ENCODE measurements at regions of chr3 and their contacts with region 1.

Region 1: GRCh38 chr3:169041677-169042171 is 621.8 kb downstream of the MECOM start:
- DNase-seq: peak; percentile 87
- H3K4me3 ChIP-seq: no peak overlapping the region
- H3K27ac ChIP-seq: peak overlapping the region; percentile 48
- H3K4me1 ChIP-seq: peaks cover 27% of the 10 kb centered on the region
- H3K27me3 ChIP-seq: no peaks in the 10 kb centered on the region
- CTCF ChIP-seq: peak; percentile 23 to 29
- POLR2A ChIP-seq: no peak

Region 2: DNA sequence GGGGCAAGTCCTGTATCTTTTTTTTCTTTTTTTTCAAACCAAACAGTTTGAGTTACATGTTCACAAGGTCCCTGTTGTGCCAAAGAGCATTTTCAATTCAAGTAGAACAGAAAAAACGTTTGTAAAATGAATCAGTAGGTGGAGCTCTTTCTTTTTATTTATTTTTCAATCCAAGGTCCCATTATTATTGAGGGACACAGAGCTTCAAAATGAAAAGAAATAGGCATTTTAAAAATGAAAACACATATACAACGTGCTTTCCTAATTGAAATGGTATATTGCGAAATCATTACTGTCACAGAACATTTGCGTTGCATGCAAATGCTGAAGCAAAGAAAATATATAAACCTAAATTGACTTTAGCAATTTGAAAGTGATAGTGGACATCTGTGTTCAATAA is 89.2 kb before region 1 on chr3:
- CTCF ChIA-PET with region 1: interaction called, 33 read pairs
- POLR2A ChIA-PET with region 1: no interaction called
- dilution Hi-C with region 1: no loop called
- intact Hi-C with region 1: no loop called
- DNase-seq: peak; percentile 62
- H3K4me3 ChIP-seq: no peak overlapping the region
- H3K27ac ChIP-seq: no peak overlapping the region
- H3K4me1 ChIP-seq: no peaks in the 10 kb centered on the region
- H3K27me3 ChIP-seq: no peaks in the 10 kb centered on the region
- CTCF ChIP-seq: no peak
- POLR2A ChIP-seq: no peak

Region 3: DNA sequence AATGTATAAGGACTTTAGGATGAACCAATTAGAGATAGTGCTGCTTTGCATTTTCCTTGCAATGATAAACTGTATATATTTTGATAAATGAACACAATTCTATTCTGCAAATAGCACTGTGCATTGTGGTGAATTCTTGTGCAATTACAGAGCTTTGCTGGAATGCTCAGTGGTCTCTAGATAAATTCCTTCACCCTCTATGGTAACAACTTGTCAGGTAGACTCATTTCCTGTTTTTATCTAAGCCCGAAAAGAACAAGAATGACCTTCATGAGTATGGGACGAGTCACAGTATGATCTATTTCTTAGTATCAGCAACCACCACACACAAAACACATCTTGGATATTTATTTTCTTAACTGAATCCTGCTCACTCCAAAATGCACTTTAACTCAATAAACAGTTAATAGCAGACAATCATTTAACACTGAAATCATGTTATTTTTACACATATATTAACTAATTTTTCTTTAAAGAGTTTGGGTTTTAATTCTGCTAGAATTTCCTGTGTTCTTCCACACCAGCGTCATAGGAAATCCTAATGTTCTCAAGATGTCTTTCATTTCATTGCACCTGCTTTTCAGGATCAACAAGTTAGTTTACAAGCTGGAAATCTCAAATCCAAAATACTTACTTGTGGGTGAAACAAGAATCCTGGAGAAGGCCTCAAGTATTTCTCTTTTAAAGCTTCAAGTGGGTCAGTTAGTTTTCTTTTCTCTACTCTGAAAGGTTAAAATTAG is 70.6 kb after region 1 on chr3:
- CTCF ChIA-PET with region 1: interaction called, 6 read pairs
- POLR2A ChIA-PET with region 1: no interaction called
- dilution Hi-C with region 1: no loop called
- intact Hi-C with region 1: loop called (anchors 2 kb)
- DNase-seq: peak; percentile 86
- H3K4me3 ChIP-seq: peak overlapping the region in 1 of 3 experiments; percentile 14
- H3K27ac ChIP-seq: peak overlapping the region; percentile 96
- H3K4me1 ChIP-seq: peaks cover 63% of the 10 kb centered on the region
- H3K27me3 ChIP-seq: no peaks in the 10 kb centered on the region
- CTCF ChIP-seq: no peak
- POLR2A ChIP-seq: peak; percentile 71

Region 4: DNA sequence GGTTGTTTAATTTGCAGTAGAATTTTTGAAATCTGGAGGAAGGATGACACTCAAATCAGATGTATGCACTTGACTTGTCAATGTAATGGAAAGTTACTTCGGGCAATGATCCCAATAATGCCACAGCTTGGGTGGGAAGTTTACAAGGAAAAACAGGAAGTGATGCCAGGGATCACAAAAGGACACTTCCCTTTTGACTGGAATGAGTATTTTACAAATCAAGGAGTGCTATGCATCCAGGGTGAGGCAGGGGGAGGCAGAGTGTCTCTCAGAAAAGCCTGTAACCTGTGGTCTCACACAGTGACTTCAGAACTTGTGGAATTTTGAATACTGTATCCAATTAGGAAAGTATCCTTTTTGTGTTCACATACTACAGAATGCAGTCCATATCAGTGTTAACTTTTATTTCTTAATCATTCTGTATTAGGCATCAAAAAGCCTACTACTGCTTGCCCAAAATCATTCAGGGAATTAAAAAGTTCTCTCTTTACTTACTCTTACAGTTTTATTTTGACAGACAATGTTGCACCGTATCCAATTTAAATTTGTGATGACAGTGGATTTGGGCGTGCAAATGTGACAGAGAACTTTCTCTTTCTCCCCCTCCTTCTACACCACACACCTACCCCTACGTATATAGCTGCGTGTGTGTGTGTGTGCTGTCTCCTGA is 176.7 kb after region 1 on chr3:
- CTCF ChIA-PET with region 1: interaction called, 4 read pairs
- POLR2A ChIA-PET with region 1: no interaction called
- dilution Hi-C with region 1: no loop called
- intact Hi-C with region 1: loop called (anchors 5 kb)
- DNase-seq: peak; percentile 98
- H3K4me3 ChIP-seq: no peak overlapping the region
- H3K27ac ChIP-seq: peak overlapping the region; percentile 66
- H3K4me1 ChIP-seq: peaks cover 23% of the 10 kb centered on the region
- H3K27me3 ChIP-seq: no peaks in the 10 kb centered on the region
- CTCF ChIP-seq: peak; percentile 74 to 89
- POLR2A ChIP-seq: no peak

Region 5: DNA sequence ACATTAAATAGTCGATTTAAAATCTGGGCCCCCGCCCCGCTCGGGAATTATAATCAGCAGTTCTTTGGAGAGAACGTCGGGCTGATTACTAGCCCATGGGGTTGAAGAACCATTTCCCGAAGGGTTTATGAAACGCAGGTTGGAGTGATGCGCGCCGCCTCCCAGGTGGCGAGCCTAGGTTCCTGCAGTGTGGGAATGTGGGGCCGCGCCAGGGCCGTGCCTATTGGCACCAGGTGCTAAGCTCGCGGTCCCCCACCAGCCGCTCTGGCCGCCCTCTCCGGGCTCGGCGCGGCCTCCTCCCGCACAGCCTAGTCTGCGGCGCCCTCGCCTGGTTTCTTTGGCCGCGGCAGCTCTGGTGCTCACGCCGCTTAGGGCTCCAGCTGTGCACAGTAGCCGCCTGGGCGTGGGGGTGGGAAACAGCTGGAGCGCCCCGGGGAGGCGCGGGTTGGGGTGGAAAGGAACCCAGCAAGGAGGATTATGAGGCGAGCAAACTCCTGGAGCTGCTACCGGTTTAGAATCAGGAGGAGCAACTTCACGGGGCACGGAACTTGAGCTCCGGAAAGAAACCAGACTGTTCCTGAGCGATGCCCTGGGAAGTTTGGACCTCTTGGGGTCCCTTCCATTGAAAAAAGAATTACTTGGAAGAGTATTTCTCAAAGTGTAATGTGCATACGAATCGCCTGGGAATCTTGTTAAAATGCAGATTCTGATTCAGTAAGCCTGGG is 627.4 kb after region 1 on chr3:
- CTCF ChIA-PET with region 1: interaction called, 72 read pairs
- POLR2A ChIA-PET with region 1: no interaction called
- dilution Hi-C with region 1: no loop called
- intact Hi-C with region 1: loop called (anchors 1 kb)
- DNase-seq: peak; percentile 84
- H3K4me3 ChIP-seq: peak overlapping the region; percentile 45 to 77 (median 70)
- H3K27ac ChIP-seq: peak overlapping the region; percentile 51
- H3K4me1 ChIP-seq: peaks cover 42% of the 10 kb centered on the region
- H3K27me3 ChIP-seq: no peaks in the 10 kb centered on the region
- CTCF ChIP-seq: peak; percentile 94
- POLR2A ChIP-seq: no peak

Region 6: GRCh38 chr3:170021083-170021482 is 979.4 kb after region 1 on chr3:
- CTCF ChIA-PET with region 1: no interaction called
- POLR2A ChIA-PET with region 1: no interaction called
- dilution Hi-C with region 1: no loop called
- intact Hi-C with region 1: no loop called
- DNase-seq: no peak
- H3K4me3 ChIP-seq: no peak overlapping the region
- H3K27ac ChIP-seq: no peak overlapping the region
- H3K4me1 ChIP-seq: no peaks in the 10 kb centered on the region
- H3K27me3 ChIP-seq: peaks cover 11 to 13% of the 10 kb centered on the region in 2 experiments
- CTCF ChIP-seq: peak in 1 of 2 donors; percentile 28
- POLR2A ChIP-seq: no peak

Measured in endothelial cell of umbilical vein (primary cell).